Aorta (tissue), 5 donors: ENCODE measurements at regions of chr7 and their contacts with region 1.

Region 1: DNA sequence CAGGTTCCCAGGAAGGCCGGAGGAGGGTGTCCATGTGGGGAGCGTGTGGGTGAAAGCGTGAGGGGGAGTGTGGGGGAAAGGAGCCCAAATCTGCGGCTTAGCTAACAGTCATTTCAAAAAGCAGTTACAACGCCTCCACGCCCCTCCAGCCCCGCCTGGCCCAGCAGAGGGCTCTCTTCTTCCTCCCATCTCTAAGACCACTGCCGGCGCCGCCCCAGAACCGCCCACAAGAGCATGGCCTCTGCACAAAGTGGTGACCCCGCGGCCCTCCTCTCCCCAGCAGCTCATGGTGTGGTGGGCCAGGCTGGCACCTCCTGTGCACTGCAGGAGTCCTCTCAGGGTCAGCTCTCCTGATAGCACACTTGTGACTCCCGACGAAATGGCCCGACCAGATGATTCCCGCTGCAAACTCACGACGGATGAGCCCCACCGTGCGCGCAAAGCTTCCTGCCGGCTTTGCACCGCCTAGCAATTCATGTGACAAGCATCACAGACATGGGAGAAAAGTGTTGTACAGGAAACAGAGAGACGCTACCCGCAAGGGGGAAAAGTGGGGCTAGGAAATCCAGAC is 12.4 kb upstream of the HUS1 start:
- DNase-seq: peak; percentile 94
- ATAC-seq: peak; percentile 95
- H3K4me3 ChIP-seq: peak overlapping the region; percentile 0 to 35
- H3K27ac ChIP-seq: no peak overlapping the region
- H3K4me1 ChIP-seq: no peaks in the 10 kb centered on the region
- H3K27me3 ChIP-seq: no peaks in the 10 kb centered on the region

Region 2: DNA sequence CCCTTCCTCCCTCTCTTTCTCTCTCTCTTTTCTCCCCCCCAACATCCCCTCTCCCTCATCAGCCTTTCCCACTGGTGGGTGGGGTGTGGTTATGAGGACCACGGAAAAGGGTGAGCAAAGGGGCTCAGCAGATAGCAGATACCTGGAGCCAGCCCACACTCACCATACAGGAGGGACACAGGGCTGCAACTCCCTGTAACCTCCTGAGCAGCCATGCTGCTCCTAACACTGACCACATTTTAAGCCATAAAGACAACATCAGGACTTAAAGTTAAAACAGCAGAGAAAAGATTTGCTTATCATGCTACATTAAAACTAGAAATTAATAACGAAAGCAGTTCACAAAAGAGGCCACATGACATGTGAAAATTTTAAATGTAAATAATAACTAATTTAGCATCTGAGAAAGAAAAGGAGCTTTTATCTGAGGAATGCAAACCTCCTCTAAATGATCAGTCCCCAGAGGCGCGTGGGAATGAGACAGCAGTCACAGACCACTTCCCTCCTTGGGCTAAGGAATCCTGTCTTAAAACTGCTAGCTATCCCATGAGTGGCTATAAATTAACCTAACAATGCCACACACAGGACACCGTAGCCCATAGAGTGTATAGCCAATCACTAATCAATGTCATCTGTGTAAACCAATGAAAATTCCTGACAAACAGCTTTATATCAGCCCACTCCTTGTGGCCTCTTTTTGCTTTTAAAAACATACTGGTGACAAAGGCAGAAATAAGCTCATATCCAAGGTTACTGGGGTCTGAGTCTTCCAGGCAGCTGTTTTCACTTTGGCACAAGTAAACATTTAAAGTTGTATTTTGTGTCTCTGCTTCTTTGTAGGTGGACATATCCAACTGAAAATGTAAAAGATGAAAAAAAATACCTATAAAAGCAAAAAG is 76.9 kb before region 1 on chr7:
- intact Hi-C with region 1: no loop called
- DNase-seq: no peak
- ATAC-seq: no peak
- H3K4me3 ChIP-seq: no peak overlapping the region
- H3K27ac ChIP-seq: no peak overlapping the region
- H3K4me1 ChIP-seq: no peaks in the 10 kb centered on the region
- H3K27me3 ChIP-seq: no peaks in the 10 kb centered on the region

Region 3: DNA sequence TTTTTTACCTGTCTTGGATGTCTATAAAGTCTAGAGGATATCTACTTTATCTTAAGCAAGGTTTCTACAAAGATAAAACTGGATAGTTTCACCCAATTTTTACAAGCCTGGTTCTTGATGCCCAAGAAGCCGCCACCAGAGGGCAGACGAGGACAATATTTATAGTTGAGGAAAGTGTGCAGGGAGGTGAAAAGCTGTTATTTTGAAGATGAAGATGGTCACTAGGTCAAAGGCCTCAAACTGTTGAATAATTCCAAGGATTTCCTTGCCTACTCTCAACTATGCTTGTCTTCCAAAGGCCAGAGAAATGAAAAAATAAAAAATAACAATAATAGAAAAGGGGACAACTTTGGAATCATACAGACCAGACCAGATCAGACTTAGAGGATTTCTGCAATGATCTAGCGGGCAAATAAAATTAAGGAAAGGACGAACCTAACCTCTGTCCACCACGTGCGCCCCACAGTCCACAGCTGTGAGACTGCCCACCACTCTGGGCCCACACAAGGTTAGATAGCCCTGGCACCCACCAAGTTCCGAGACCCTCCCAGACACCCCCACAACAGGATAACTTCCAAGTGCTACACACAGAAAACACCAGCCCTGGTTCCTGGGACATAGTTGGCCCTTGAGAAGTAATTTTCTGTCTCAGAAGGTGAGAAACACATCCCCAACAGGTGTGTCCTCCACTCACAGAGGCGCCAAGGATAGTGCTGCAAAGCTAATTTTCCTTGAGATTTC is 46.4 kb before region 1 on chr7:
- intact Hi-C with region 1: loop called in 1 of 2 experiments (anchors 5 kb)
- DNase-seq: peak; percentile 87 to 94
- ATAC-seq: no peak
- H3K4me3 ChIP-seq: no peak overlapping the region
- H3K27ac ChIP-seq: no peak overlapping the region
- H3K4me1 ChIP-seq: no peaks in the 10 kb centered on the region
- H3K27me3 ChIP-seq: no peaks in the 10 kb centered on the region

Region 4: DNA sequence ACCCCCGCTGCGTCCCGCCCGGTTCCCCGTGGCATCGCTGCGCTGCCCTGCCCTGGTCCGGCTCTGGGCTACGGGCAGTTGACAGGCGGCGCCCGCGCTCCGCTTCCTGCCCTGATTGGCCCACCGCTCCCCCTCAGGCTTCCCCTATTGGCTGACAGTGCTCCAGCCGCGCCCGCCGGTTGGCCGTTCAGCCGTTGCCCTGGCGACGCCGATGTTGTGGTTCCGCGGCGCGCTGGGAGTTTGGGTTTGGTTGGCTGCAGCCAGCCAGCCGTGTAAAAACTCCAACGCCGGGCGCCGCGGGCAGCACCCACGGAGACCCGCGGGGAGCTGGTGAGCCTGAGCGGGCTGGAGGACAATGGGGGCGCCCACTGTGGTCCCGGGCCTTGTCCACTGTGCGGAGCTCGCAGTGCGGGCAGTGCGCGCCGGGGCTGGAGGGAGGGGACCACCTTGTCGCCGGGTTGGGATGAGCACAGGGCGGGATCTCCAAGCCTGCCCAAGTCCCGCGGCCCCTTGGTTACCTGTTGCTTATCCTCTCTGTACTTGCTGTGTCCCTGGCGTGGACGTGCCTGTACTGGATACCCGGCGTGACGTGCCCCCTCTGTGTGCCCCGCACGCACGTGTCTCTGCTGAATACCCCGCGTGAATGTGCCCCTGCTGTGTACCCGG is 43.6 kb after region 1 on chr7 and contains the start of gene C7orf57:
- intact Hi-C with region 1: loop called in 1 of 2 experiments (anchors 10 kb)
- DNase-seq: peak; percentile 96 to 98
- ATAC-seq: peak; percentile 97
- H3K4me3 ChIP-seq: peak within 1 kb of the TSS; percentile 17 to 72
- H3K27ac ChIP-seq: no peak within 1 kb of the TSS
- H3K4me1 ChIP-seq: no peaks in the 10 kb centered on the region
- H3K27me3 ChIP-seq: no peaks in the 10 kb centered on the region
- total RNA-seq, gene C7orf57: not detected

Region 5: DNA sequence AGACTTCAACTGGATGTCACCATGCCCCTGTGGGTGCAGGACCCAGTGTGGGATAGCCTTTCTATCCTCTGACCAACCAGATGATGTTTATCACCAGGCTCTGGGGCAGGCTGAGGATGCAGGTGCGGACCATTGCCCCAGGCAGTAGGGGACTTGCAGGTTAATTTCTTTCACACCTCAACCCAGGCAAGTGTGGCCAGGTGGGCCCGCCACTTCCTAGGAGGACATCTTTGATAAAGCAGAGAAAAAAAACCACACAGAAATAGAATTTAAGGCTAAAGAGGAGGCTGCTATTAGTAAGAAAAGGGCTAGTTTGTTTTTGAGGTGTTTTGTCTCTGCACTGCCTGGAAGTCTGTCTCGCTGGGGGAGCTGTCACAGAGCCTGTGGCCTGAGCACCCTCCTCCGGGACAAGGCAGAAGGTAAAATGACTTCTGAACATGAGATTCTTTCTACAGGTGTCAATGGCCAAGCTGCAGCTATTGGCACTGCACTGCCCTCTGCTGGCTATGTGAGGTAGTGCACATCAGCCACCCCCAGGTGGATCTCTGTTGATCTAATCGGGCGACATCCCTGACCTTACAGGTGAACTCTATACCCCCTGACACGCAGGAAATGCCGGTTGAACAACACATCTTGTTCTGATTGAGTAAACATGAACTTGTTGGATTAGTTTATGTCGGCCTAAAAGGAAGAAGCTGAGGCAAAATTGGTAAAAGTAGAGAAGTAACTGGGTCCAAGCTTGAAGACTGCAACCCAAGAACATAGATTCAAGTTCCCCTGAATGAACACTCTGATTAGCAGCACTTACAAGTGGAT is 118.2 kb after region 1 on chr7:
- intact Hi-C with region 1: loop called (anchors 1 to 2 kb)
- DNase-seq: peak; percentile 75 to 90
- ATAC-seq: peak; percentile 87
- H3K4me3 ChIP-seq: no peak overlapping the region
- H3K27ac ChIP-seq: no peak overlapping the region
- H3K4me1 ChIP-seq: no peaks in the 10 kb centered on the region
- H3K27me3 ChIP-seq: no peaks in the 10 kb centered on the region